ENCODE measurements at regions of chr7 and their contacts with region 1.

Region 1: GRCh38 chr7:137096607-137097006 is 228.2 kb downstream of the CHRM2 start:
- DNase-seq: no peak
- H3K4me3 ChIP-seq: no peak overlapping the region
- H3K27ac ChIP-seq: no peak overlapping the region
- H3K4me1 ChIP-seq: no peaks in the 10 kb centered on the region
- H3K27me3 ChIP-seq: no peaks in the 10 kb centered on the region
- CTCF ChIP-seq: no peak

Region 2: DNA sequence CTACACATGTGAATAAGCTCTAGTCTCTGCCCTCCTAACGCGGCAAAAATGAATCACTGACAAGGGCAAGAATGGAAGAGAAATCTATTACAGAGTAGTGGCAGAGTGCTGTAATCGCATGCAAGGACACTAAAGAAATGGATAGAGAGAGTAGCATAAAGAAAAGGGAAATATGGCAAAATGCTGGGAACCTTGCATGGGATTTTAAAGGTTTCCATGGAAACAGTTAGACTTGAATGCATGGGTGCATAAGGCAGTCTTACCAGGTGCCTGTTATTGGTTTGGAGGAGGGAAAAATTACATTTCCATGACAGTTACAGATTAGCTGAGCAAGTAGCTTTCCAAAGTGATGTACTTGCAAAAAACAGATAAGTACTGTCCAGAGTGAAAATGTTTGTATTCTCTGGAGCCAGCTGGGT is 13.5 kb after region 1 on chr7:
- CTCF ChIA-PET with region 1: no interaction called
- POLR2A ChIA-PET with region 1: no interaction called
- intact Hi-C with region 1: loop called (anchors 2 kb)
- DNase-seq: no peak
- H3K4me3 ChIP-seq: no peak overlapping the region
- H3K27ac ChIP-seq: no peak overlapping the region
- H3K4me1 ChIP-seq: no peaks in the 10 kb centered on the region
- H3K27me3 ChIP-seq: peaks cover 7% of the 10 kb centered on the region; the same call in 1 of the 2 replicates
- CTCF ChIP-seq: no peak